Activated naive CD4-positive, alpha-beta T cell treated with anti-CD3 and anti-CD28 coated beads for 36 hours (primary cell): ENCODE measurements at regions of chr14 and their contacts with region 1.

Region 1: GRCh38 chr14:50726372-50727107 is 58.4 kb upstream of the SAV1 start:
- DNase-seq: peak; percentile 48
- H3K4me3 Mint-ChIP-seq: peak overlapping the region; percentile 3
- H3K27ac Mint-ChIP-seq: peak overlapping the region; percentile 83
- H3K4me1 Mint-ChIP-seq: peaks cover 28% of the 10 kb centered on the region
- H3K27me3 Mint-ChIP-seq: no peaks in the 10 kb centered on the region

Region 2: DNA sequence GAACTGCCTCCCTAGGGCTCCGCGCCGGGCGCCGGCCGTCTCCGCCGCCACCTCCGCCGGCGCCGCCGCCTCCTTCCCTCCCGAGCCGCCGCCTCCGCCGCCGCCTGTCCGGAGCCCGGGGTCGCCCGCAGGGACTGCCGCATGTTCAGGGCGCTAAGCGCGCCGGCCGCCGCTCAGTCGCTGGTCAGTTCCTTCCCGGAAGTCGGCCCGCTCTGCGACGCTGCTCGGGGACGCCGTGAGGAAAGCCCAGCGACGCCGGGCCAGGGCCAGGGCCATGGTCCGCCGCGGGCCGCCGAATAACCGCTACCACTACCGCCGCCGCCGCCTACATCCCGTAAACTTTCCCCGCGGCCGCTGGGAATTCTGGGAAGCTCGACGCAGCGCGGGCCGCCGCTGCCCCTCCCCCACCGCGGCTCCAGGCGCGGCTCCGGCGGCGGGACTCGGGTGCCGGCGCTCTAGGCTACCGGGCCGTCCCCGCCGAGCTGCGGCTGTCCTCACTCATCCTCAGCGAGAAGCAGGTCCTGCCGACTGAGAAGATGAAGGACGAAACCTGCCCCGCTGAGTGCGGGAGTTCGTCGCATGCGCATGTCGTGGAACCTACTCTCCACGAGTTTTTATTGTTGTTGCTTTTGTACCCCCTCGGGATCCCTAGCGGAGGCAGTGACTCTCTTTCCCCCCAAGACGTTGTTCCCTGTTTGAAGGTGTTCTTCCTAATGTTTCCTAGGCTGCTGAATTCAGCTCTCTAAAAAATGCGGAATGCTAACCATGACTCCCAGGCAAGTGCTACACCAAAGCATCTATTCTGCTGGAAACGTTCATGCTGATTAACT is 58.3 kb before region 1 on chr14 and contains the start of gene SAV1:
- CTCF ChIA-PET with region 1: no interaction called
- intact Hi-C with region 1: loop called (anchors 1 kb)
- DNase-seq: peak; percentile 65
- H3K4me3 Mint-ChIP-seq: no peak within 1 kb of the TSS
- H3K27ac Mint-ChIP-seq: peak within 1 kb of the TSS; percentile 56
- H3K4me1 Mint-ChIP-seq: peaks cover 14% of the 10 kb centered on the region
- H3K27me3 Mint-ChIP-seq: no peaks in the 10 kb centered on the region
- total RNA-seq, gene SAV1: 12.7 to 13.5 TPM

Region 3: GRCh38 chr14:50697659-50698290 is 28.8 kb before region 1 on chr14:
- CTCF ChIA-PET with region 1: no interaction called
- intact Hi-C with region 1: no loop called
- DNase-seq: no peak
- H3K4me3 Mint-ChIP-seq: no peak overlapping the region
- H3K27ac Mint-ChIP-seq: no peak overlapping the region
- H3K4me1 Mint-ChIP-seq: no peaks in the 10 kb centered on the region
- H3K27me3 Mint-ChIP-seq: peaks cover 17% of the 10 kb centered on the region

Region 4: GRCh38 chr14:50736932-50737419 is 10.4 kb after region 1 on chr14:
- CTCF ChIA-PET with region 1: interaction called, 10 read pairs
- intact Hi-C with region 1: loop called (anchors 1 kb)
- DNase-seq: peak; percentile 58
- H3K4me3 Mint-ChIP-seq: no peak overlapping the region
- H3K27ac Mint-ChIP-seq: no peak overlapping the region
- H3K4me1 Mint-ChIP-seq: peaks cover 38% of the 10 kb centered on the region
- H3K27me3 Mint-ChIP-seq: no peaks in the 10 kb centered on the region

Region 5: DNA sequence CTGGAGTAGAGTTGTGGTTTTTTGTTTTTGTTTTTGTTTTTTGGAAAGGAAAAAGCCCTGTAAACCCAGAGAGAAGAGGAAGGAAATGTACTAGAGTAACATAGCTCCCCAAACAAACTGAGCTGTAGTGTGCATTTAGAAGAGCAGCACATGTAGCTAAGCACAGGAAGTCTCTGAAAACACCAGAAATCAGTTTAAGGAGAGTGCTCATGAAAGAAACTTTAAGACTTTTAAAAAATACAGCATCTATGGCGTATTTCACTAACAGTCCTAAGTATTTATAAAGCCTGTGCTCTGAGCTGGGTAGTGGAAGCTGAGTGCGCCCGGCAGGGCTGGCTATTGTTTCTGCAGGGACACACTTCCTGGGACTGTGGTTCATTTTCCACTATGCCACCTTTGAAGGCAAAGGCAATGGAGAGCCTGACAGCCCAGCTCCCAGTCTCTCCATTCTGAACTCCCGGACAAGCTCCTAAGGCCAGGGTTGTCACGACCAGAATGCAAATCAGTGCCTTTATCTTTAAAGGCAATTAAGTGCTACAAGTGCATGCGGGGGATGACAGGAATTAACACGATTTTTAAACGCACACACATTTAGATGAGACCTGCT is 59.0 kb after region 1 on chr14:
- CTCF ChIA-PET with region 1: no interaction called
- intact Hi-C with region 1: loop called (anchors 1 kb)
- DNase-seq: no peak
- H3K4me3 Mint-ChIP-seq: no peak overlapping the region
- H3K27ac Mint-ChIP-seq: no peak overlapping the region
- H3K4me1 Mint-ChIP-seq: peaks cover 66% of the 10 kb centered on the region
- H3K27me3 Mint-ChIP-seq: no peaks in the 10 kb centered on the region

Region 6: DNA sequence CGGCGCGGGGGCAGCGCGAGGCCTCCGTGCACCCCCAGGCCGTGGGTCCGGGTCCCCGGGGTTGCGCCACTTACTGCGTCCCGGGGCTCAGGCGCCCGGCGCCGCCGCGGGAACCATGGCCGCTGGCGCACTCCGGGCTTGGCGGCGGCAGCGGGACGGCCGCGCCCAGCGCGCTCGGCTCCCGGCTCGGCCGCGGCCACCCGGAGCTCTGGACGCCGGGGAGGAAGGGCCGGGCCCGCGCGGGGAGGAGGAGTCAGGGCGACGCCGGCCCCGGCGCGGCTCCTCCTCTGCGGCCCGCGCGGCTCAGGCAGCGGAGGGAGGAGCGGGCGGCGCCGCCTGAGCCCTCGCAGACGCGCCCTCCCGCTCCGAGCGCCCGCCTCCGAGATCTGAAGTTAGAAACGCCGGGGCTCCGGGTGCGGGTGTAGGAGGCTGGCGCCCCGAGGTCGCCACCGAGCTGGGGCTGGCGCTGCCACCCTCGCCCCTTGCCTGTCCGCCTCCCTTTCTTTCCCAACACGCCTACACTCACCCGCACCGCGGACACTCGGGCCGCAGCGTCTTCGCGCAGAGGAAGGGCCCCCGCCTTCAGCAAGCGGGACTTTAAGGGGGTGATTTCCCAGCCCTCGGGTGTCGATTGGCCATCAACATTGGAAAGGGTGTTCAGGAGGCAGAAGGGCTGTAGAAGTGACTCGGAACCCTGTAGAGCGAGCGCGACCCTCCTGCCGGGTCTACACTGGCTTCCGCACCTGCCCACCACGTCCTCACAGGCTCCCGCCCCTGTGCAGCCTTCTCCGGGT is 104.6 kb after region 1 on chr14 and contains the start of gene NIN:
- CTCF ChIA-PET with region 1: no interaction called
- intact Hi-C with region 1: loop called (anchors 1 kb)
- DNase-seq: peak; percentile 69
- H3K4me3 Mint-ChIP-seq: peak within 1 kb of the TSS; percentile 88
- H3K27ac Mint-ChIP-seq: peak within 1 kb of the TSS; percentile 83
- H3K4me1 Mint-ChIP-seq: peaks cover 62% of the 10 kb centered on the region
- H3K27me3 Mint-ChIP-seq: no peaks in the 10 kb centered on the region
- total RNA-seq, gene NIN: 56.9 to 57.9 TPM